AG04450 (cell line): ENCODE measurements at regions of chr11 and their contacts with region 1.

Region 1: DNA sequence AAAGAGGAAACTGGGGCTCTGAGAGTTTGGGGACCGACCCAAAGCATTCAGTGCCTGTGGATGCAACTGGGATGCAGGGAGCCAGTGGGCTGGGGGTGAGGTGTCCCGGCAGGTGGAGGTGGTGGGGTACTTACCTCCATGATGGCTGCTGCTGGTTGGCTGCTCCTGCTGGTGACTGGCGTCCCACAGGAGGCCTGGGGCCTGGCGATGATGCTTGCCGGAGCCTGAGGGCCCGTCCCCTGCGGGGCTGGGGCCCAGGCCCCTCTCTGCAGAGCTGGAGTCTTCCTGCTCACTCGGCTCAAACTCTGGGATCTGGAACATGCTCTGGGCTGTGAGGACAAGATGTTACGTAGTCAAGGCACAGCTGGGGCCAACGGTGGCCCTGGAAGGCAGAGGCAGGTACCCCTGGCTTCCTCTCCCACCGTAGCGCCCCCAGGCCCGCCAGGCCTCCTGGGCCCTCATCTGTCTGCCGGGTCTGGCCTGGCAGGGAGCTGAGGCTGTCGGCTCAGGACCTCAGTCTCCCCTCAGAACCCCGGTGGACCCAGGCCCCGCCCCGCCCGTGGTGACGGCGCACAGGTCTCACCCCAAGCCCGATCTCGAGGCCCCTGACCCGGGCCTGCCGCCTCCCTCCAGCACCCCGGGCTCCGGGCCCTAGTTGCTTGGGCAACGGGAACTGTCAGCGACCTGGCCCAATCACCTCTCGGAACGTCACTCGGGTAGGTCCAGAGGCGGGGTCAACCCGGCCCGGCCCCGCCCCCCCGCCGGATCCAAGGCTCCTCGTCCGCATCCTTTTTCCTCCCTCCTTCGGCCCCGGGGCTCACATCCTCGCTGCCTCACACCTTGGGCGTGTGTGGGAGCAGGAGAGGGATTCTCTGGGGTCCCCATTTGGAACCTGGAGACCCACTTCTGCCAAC is at the start of gene BAD:
- DNase-seq: peak; percentile 68
- H3K4me3 ChIP-seq: peak within 1 kb of the TSS; percentile 73
- H3K27ac ChIP-seq: peak within 1 kb of the TSS; percentile 88
- H3K27me3 ChIP-seq: no peaks in the 10 kb centered on the region
- CTCF ChIP-seq: no peak
- polyA plus RNA-seq, gene BAD: 36.1 and 54.8 TPM in 2 replicates

Region 2: DNA sequence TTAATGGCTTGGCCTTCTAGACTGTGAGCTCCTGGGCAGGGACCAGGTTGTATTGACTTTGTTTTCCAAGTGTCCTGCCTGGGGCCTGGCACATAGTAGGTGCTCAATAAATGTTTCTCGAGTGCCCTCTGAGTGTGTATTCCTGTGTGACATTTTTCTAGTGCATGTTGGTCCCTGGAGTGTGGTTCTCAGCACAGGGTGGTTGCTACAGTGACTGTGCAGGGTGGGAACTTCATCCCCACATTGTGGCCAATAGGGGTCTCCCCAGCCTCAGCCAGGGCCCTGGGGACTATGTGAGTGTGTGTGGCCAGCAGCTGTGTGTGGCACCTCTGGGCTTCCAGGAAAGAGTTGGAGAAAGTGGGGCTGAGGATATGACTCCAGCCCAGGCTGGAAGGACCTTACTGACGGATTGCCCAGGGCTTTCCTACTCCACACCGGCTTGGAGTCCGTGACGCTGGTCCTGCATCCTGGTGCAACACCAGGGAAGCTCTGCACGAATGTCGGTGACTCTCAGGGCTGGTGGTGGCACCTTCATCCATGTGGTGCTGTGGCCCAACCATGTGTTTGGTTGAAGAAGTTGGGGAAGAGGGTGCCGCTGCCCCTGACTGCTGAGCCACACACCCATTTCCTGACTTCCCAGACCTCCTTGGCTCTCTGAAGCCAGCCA is 454.3 kb before region 1 on chr11:
- CTCF ChIA-PET with region 1: no interaction called
- POLR2A ChIA-PET with region 1: interaction called, 10 read pairs
- DNase-seq: no peak
- H3K4me3 ChIP-seq: no peak overlapping the region
- H3K27ac ChIP-seq: no peak overlapping the region
- H3K27me3 ChIP-seq: no peaks in the 10 kb centered on the region
- CTCF ChIP-seq: peak; percentile 47

Region 3: DNA sequence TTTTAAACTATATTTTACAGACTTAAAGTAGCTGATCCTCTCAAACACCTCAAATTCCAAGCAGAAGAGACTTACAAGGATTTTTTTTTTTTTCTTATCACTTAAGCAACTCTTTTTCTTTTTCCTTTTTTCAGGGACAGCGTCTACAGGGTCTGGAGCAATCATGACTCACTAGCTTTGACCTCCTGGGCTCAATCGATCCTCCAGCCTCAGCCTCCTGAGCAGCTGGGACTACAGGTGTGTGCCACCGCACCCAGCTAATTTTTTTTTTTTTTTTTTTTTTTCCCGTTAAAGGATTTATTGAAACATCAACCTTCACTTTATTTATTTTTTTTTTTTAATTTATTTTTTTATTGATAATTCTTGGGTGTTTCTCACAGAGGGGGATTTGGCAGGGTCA is 113.9 kb before region 1 on chr11:
- CTCF ChIA-PET with region 1: no interaction called
- POLR2A ChIA-PET with region 1: interaction called, 10 read pairs
- DNase-seq: no peak
- H3K4me3 ChIP-seq: no peak overlapping the region
- H3K27ac ChIP-seq: no peak overlapping the region
- H3K27me3 ChIP-seq: no peaks in the 10 kb centered on the region
- CTCF ChIP-seq: no peak

Region 4: DNA sequence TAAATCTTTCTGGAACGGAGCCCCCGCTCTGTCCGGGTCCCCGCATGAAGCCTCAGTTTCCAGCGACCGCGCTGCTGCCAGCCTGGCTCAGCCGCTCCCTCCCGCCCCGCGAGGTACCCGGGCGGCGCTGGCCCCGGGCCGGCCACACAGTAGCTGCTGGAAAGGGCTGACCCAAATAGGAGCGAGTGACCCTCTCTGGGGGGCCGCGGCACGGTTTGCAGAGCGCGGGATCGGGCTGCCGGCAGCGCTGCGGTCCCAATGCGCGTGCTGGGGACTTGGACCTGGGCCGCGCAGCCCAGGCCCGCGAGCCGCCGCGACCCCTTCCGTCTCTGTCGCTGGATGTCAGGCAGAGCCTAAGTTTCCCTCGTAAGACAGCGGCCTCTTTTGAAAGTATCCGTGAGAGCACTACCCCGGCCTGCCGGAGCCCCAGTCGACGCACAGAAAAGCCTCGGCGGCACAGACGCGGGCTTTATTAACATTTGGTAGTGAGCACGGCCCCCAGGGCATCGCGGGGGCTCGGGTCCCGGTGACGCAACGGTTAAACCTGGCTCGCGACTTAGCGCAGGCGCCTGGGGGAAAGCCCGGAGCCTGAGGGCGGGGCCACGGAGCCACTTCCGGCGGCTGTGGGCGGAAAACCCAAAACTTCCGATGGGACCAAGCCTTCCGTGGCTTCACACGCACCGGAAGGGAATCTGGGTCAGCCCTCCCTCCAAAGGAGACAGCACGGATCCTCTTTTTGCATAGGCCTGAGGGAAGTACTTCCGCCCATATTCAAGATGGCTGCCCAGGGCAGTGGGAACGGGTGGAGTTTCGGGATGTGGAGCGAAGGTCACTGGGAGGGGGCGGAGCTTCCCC is 14.7 kb before region 1 on chr11:
- CTCF ChIA-PET with region 1: no interaction called
- POLR2A ChIA-PET with region 1: interaction called, 28 read pairs
- DNase-seq: peak; percentile 100
- H3K4me3 ChIP-seq: peak overlapping the region; percentile 74
- H3K27ac ChIP-seq: peak overlapping the region; percentile 95
- H3K27me3 ChIP-seq: no peaks in the 10 kb centered on the region
- CTCF ChIP-seq: no peak; the same call in 1 of the 2 replicates

Region 5: DNA sequence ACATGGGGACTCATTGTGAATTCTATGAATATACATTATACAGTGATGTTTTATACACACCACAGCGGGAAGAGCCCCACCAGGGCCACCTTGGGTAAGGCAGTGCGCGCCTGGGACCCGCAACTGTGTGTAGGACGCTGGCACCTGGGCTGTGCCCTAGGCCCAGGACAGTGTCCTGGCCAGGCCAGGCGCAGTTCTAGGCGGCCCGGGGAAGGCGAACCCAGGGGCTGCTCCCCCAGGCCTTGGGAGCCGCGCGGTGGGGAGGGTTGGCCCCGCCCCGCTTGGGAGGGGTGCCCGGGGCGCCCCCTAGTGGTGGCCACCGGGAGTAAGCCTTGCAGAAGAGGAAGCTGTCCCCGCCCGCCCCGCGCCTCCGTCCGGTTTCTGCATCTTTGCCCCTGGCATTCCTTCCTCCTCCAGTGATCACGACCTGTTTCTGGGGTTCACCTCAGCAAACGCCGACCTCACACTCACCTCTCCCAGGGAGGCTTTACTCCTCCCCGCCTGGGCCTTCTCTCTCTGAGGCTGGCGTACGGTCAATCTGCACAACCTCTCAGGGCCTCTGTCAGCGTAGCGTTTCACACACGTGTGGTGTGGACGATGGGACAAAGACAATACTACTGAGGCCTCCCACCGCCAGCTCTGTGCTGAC is 603.6 kb after region 1 on chr11:
- CTCF ChIA-PET with region 1: no interaction called
- POLR2A ChIA-PET with region 1: interaction called, 10 read pairs
- DNase-seq: no peak
- H3K4me3 ChIP-seq: no peak overlapping the region
- H3K27ac ChIP-seq: no peak overlapping the region
- H3K27me3 ChIP-seq: no peaks in the 10 kb centered on the region
- CTCF ChIP-seq: peak; percentile 81